ENCODE measurements at regions of chr16 and their contacts with region 1.

Region 1: DNA sequence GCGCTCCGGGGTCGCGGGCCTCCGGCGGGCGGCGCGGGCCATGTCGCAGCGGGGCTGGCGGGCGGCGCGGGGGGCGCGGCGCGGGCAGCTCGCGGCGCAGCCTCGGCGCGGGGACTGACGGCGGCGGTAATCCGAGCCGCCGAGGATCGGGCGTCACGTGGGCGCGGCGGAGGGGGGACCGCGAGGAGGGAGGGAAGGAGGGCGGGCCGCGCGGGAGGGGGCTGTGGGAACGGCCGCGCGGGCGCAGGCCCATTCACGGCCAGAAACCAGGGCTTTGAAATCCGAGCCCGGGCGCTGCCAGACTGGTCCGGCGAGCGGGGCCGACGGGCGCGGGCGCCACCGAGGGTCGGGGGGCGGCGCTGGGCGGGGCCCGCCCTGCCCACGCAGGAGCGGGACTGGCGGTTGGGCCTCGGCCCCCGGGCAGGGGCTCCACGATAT is at the start of gene MTSS2:
- DNase-seq: peak in 1 of 2 donors; percentile 90
- H3K4me3 ChIP-seq: peak within 1 kb of the TSS; percentile 89 to 91
- H3K27ac ChIP-seq: peak within 1 kb of the TSS; percentile 96 to 97
- H3K4me1 ChIP-seq: peaks cover 36 to 84% of the 10 kb centered on the region in 2 donors
- H3K27me3 ChIP-seq: no peaks in the 10 kb centered on the region
- CTCF ChIP-seq: no peak
- total RNA-seq, gene MTSS2: 98.6 TPM

Region 2: GRCh38 chr16:70348991-70349390 is 337.0 kb before region 1 on chr16:
- intact Hi-C with region 1: no loop called
- DNase-seq: no peak
- H3K4me3 ChIP-seq: no peak overlapping the region
- H3K27ac ChIP-seq: no peak overlapping the region
- H3K4me1 ChIP-seq: peaks cover 10 to 19% of the 10 kb centered on the region in 2 donors
- H3K27me3 ChIP-seq: no peaks in the 10 kb centered on the region
- CTCF ChIP-seq: no peak

Region 3: GRCh38 chr16:70428178-70428998 is 257.6 kb before region 1 on chr16:
- intact Hi-C with region 1: no loop called
- DNase-seq: peak; percentile 80 to 94
- H3K4me3 ChIP-seq: peak overlapping the region in 1 of 2 donors; percentile 1
- H3K27ac ChIP-seq: peak overlapping the region; percentile 86 to 92
- H3K4me1 ChIP-seq: peaks cover 23 to 41% of the 10 kb centered on the region in 2 donors
- H3K27me3 ChIP-seq: no peaks in the 10 kb centered on the region
- CTCF ChIP-seq: no peak

Region 4: DNA sequence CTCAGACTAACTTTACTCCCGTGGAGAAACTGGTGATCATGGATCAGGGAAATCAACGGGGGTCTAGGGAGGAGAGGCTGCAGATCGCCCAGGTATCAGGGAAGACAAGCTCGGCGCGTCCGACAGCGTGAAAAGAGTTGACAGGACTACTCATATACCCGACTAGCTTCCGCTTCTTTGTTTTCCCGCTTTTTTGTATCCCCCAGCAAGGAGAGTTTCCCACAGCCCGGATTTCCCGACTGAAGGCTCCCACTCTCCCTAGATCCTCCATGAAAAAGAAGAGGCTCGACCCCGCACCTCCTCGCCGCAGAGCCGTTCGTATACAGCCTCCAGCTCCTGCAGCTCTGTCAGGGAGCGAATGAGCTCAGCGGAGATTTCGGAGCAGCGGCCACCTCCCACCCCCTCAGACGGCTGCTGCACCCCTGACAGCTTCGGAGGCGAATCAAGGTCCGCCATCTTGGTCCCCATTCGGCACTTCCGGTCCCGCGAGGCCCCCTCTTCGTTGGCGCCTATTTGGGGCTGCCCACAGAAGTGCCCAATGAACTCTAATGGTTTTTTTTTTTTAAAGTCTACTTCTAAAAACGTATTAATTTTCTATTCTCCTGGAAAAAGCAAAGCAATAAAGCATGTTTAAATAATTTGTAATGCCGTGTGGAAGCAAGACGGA is 162.7 kb before region 1 on chr16 and contains the start of gene COG4:
- intact Hi-C with region 1: no loop called
- DNase-seq: peak; percentile 24 to 91
- H3K4me3 ChIP-seq: peak within 1 kb of the TSS; percentile 66 to 89
- H3K27ac ChIP-seq: peak within 1 kb of the TSS; percentile 86 to 95
- H3K4me1 ChIP-seq: peaks cover 8 to 25% of the 10 kb centered on the region in 2 donors
- H3K27me3 ChIP-seq: no peaks in the 10 kb centered on the region
- CTCF ChIP-seq: no peak
- total RNA-seq, gene COG4: 59.1 TPM

Region 5: GRCh38 chr16:70540994-70541393 is 145.0 kb before region 1 on chr16:
- intact Hi-C with region 1: no loop called
- DNase-seq: no peak
- H3K4me3 ChIP-seq: no peak overlapping the region
- H3K27ac ChIP-seq: no peak overlapping the region
- H3K4me1 ChIP-seq: no peaks in the 10 kb centered on the region
- H3K27me3 ChIP-seq: no peaks in the 10 kb centered on the region
- CTCF ChIP-seq: no peak

Region 6: DNA sequence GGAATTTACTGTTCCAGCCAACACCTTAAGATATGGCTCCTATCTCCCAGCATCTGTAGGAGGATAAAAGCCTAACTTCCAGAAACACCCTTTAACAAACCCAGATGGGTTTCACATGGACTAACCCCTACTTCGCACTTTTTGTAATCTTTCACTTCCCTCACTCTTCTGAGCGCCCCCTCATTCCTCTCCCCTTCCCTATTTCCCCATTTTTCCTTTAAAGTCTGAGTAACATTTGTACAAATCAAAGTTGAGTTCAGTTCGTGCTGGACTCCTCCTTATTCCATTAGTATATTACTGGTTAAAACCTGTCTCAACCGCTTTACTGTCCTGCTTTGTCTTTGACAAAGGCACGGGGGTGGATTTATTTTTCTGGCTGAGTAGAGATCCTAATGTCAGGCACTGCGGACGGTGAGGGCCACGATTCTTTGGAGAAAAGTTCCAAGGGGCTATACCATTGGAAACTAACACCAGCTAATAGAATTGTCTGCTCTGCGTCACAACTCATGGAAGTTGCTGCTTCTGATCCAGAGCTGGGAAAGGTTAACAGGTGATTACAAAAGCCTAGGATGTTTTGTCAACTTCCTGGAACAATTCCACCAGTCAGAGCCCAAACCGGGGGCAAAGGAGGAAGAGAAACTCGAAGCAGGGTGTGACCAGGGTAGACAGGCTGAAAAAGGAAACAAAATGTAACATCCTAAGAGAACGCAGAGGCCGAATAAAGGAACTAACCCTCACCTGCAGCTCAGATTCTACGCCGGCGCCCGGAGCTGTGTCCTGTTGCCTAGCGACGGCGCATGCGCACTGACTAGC is 878.4 kb after region 1 on chr16:
- intact Hi-C with region 1: loop called (anchors 10 kb)
- DNase-seq: no peak
- H3K4me3 ChIP-seq: peak overlapping the region; percentile 69 to 89
- H3K27ac ChIP-seq: peak overlapping the region in 1 of 2 donors; percentile 65
- H3K4me1 ChIP-seq: peaks cover 0 to 4% of the 10 kb centered on the region in 2 donors
- H3K27me3 ChIP-seq: no peaks in the 10 kb centered on the region
- CTCF ChIP-seq: no peak

Measured in ascending aorta (tissue), 2 donors.